Motor neuron (in vitro differentiated cells): ENCODE measurements at regions of chr1 and their contacts with region 1.

Region 1: DNA sequence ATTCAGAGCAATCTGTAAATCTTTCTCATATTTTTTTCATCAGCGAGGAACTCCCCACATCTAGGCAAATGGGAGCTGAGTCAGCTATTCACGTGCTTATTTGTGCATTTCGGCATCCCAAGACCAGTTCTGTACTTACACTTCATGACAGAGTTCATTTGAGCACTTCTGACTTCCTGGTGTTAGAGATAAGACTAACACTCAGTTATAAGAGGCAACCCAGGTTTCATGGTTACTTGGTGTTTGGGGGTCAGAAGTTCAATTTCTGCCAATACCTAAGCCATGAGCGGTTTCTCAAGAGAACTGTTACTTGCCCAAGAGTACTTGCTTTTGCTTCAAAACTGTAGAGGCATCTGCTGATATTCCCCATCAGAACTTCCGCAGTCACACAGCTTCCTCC is 24.1 kb upstream of the DESI2 start:
- ATAC-seq: peak in 2 of 8 experiments; percentile 58 to 79
- H3K4me3 ChIP-seq: no peak overlapping the region
- H3K27ac ChIP-seq: no peak overlapping the region
- H3K4me1 ChIP-seq: no peaks in the 10 kb centered on the region

Region 2: DNA sequence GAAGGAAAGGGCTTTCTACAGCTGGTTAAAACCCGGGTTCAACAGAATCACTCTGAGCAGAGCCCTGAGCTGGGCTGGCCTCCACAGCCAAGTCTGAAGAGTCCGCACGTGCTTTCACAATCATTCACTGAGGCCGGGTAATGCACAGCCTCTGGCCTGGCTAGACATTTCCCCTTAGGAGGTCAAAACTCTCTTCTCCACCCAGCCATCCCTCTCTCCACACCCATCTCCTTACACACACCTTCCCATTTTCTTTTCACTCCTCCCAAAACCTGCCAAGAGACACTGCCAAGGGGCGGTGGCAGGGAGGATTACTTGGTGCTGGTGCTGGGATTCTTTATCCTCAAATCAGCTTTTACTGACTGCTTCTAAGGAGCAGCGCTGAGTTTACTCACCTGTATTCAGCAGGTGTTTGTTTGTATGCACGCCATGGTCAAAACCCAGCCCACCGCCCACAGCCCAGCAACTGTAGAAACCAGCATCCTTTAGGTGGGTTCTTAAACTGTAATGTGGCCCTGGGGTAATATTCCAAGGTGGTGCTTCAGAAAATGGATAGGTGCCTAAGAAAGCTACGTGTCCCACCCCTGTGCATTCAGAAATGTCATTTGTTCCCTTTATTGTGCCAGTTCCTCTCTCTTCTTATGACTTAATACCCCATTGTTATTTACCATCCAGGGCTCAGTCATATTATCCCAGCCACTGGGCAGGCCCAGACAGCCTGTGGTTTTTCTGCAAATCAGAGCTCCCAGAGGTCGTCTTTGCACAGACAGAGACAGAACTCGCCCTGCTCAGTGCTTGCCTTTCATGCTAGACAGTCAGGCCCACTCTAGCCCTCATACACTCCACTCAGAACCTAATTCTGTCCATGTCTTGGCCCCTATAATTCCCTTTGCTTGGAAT is 257.3 kb before region 1 on chr1:
- in situ Hi-C with region 1: no loop called
- ATAC-seq: peak in 1 of 8 experiments; percentile 68
- H3K4me3 ChIP-seq: no peak overlapping the region
- H3K27ac ChIP-seq: no peak overlapping the region
- H3K4me1 ChIP-seq: no peaks in the 10 kb centered on the region

Region 3: DNA sequence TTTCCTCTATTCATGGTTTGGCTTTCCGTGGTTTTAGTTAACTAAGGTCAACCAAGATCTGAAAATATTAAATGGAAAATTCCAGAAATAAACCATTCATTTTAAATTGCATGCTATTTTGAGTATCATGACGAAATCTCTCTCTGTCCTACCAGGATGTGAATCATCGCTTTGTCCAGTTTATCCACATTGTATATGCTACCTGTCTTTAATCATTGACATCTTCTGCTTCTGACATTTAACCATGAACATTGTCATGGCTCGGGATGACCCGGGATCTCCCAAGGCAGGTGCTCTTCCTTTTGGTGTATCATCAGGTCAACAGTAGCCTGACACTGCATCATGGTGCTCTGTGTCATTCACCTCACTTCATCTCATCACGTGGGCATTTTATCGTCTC is 361.0 kb after region 1 on chr1:
- in situ Hi-C with region 1: loop called in 1 of 9 experiments (anchors 25 kb)
- ATAC-seq: peak in 1 of 8 experiments; percentile 39
- H3K4me3 ChIP-seq: no peak overlapping the region
- H3K27ac ChIP-seq: no peak overlapping the region
- H3K4me1 ChIP-seq: no peaks in the 10 kb centered on the region